ENCODE measurements at regions of chr10 and their contacts with region 1.

Region 1: GRCh38 chr10:97869091-97870042 is 19.7 kb downstream of the GOLGA7B start:
- DNase-seq: peak; percentile 96
- ATAC-seq: peak; percentile 99
- H3K4me3 Mint-ChIP-seq: no peak overlapping the region
- H3K27ac Mint-ChIP-seq: peak overlapping the region; percentile 73
- H3K4me1 Mint-ChIP-seq: peaks cover 15% of the 10 kb centered on the region
- H3K27me3 Mint-ChIP-seq: peaks cover 10% of the 10 kb centered on the region

Region 2: DNA sequence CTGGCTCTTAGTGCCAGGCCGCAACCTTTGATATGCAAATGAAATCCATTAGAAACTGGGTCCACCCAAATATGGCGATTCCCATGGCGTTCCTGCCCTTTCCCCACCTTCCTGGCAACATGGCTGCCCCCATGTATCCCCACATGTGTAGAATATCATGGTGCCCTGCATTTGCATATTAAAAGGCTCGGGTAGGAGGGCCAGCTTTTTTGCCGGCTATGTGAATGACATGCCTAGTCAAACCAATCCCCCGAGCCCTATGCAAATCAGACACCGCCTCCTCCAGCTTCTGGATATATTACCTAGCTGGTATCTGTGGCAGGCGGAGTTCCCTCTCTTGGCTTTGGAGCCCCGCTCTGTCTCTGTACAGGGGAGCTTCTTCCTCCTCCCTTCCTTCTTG is 389.4 kb before region 1 on chr10:
- CTCF ChIA-PET with region 1: no interaction called
- DNase-seq: no peak
- ATAC-seq: no peak
- H3K4me3 Mint-ChIP-seq: no peak overlapping the region
- H3K27ac Mint-ChIP-seq: no peak overlapping the region
- H3K4me1 Mint-ChIP-seq: no peaks in the 10 kb centered on the region
- H3K27me3 Mint-ChIP-seq: no peaks in the 10 kb centered on the region

Region 3: DNA sequence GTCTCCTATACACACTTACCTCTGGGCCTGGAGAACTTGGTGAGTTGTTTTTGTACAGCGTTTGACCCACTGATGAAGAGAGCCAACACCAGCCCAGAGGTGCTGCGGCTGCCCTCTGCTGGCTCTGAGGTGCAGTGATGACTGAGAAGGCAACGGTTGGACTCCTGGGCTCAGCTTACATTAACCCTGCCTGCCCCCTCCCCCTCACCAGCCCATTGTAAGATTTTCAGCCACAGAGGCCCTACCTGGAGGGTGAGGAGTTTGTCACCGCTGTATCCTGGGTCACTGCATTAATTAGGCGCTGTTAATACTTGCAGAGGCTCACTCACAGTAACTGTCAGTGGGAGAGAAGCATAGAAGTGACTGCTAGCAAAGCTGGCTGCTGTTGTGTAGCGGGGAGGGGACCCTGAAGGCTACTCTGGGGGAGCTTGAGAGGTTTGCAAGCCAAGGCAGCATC is 315.8 kb before region 1 on chr10:
- CTCF ChIA-PET with region 1: no interaction called
- DNase-seq: peak; percentile 66
- ATAC-seq: peak; percentile 98
- H3K4me3 Mint-ChIP-seq: no peak overlapping the region
- H3K27ac Mint-ChIP-seq: no peak overlapping the region
- H3K4me1 Mint-ChIP-seq: peaks cover 1% of the 10 kb centered on the region
- H3K27me3 Mint-ChIP-seq: peaks cover 3% of the 10 kb centered on the region

Region 4: GRCh38 chr10:97759158-97759887 is 110.0 kb before region 1 on chr10:
- CTCF ChIA-PET with region 1: interaction called, 29 read pairs
- DNase-seq: peak; percentile 66
- ATAC-seq: peak; percentile 77
- H3K4me3 Mint-ChIP-seq: no peak overlapping the region
- H3K27ac Mint-ChIP-seq: no peak overlapping the region
- H3K4me1 Mint-ChIP-seq: peaks cover under 1% of the 10 kb centered on the region
- H3K27me3 Mint-ChIP-seq: no peaks in the 10 kb centered on the region

Region 5: GRCh38 chr10:97780841-97781617 is 88.3 kb before region 1 on chr10:
- CTCF ChIA-PET with region 1: interaction called, 288 read pairs
- DNase-seq: no peak
- ATAC-seq: peak; percentile 8
- H3K4me3 Mint-ChIP-seq: no peak overlapping the region
- H3K27ac Mint-ChIP-seq: peak overlapping the region; percentile 69
- H3K4me1 Mint-ChIP-seq: peaks cover 21% of the 10 kb centered on the region
- H3K27me3 Mint-ChIP-seq: no peaks in the 10 kb centered on the region

Region 6: GRCh38 chr10:97849687-97850402 is 19.5 kb before region 1 on chr10 and contains the start of gene GOLGA7B:
- CTCF ChIA-PET with region 1: interaction called, 46 read pairs
- DNase-seq: peak; percentile 81
- ATAC-seq: peak; percentile 92
- H3K4me3 Mint-ChIP-seq: peak within 1 kb of the TSS; percentile 76
- H3K27ac Mint-ChIP-seq: peak within 1 kb of the TSS; percentile 64
- H3K4me1 Mint-ChIP-seq: peaks cover 36% of the 10 kb centered on the region
- H3K27me3 Mint-ChIP-seq: peaks cover 7% of the 10 kb centered on the region
- total RNA-seq, gene GOLGA7B: 1.5 to 4.3 TPM